Heart right ventricle (tissue), 16 donors: ENCODE measurements at regions of chr15 and their contacts with region 1.

Region 1: DNA sequence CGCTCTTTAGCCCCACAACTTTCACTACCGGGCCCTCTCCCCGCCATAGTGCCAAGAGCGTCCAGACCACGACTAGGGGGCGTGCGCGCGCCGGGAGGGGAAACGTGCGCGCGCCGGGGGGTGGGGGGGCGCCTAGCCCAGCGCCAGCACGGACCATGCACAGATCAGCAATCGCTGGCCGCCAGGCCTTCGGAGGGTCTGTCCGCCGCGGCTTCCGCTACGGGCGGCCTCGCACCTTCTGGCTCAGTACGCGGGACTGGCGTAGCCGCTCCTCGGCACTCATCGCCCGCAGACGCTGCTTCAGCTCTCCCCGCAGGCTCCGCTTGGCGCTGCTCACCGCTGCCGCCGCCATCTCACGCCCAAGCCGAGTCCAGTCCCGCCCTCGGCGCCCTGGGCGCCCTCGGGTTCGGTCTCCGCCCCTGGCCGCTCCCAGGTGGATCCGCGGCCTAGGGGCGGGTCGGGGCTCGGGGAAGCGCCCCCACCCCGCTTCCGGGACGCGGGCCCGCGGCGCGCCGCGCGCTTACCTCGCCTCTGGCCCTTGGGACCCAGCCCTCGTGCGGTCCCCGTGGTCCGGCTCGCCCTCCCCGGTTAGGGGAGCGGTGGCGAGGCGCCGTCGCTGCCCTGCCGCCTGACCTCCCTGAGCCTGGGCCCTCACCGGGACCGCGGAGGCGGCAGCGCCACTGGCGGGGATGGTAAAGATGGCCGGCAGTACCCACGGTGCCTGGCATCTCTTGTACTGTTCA is at the start of gene MTHFS:
- DNase-seq: peak; percentile 75 to 82
- ATAC-seq: peak; percentile 96 to 99 (median 97)
- H3K4me3 ChIP-seq: peak within 1 kb of the TSS; percentile 52 to 95 (median 79)
- H3K27ac ChIP-seq: peak within 1 kb of the TSS; percentile 77 to 99 (median 96)
- H3K4me1 ChIP-seq: peaks cover 0 to 39% (median 7%) of the 10 kb centered on the region in 9 donors
- H3K27me3 ChIP-seq: no peaks in the 10 kb centered on the region
- CTCF ChIP-seq: peak in 8 of 9 donors; percentile 42 to 73 (median 60)
- total RNA-seq, gene MTHFS: 10.1 to 25.6 (median 19.3) TPM

Region 2: GRCh38 chr15:79923515-79924395 is 26.9 kb after region 1 on chr15:
- intact Hi-C with region 1: loop called in 3 of 10 experiments (anchors 1 to 2 kb)
- DNase-seq: peak; percentile 92 to 94
- ATAC-seq: peak; percentile 98 to 100 (median 99)
- H3K4me3 ChIP-seq: peak overlapping the region; percentile 66 to 99 (median 87)
- H3K27ac ChIP-seq: peak overlapping the region; percentile 50 to 98 (median 94)
- H3K4me1 ChIP-seq: peaks cover 0 to 16% (median 9%) of the 10 kb centered on the region in 9 donors
- H3K27me3 ChIP-seq: no peaks in the 10 kb centered on the region
- CTCF ChIP-seq: no peak

Region 3: DNA sequence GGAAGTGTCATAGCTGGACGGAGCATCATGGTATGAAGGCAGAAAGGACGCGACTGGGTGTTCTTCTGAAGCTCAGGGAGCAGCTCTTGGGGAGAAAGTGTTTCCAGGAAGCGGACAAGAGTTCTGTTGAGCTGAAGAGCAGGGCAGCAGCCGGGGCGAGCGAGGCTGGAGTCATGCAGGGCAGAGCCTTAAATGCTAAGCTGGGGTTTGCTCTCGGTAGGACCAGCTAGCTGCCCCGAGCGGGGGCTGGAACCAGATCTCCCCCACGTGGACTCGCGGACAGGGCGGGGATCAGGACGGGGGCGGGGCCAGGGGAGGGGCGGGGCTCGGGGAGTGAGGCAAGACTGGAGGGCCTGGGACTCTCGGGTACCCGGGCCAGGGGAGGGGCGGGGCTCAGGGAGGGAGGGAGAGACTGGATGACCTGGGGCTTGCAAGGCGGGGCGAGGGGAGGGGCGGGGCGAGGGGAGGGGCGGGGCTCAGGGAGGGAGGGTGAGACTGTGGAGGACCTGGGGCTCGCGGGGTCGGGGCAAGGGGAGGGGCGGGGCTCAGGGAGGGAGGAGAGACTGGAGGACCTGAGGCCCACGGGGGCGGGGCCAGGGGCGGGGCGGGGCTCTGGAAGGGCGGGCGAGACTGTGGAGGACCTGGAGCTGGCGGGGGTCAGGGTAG is 255.5 kb after region 1 on chr15:
- intact Hi-C with region 1: loop called in 2 of 10 experiments (anchors 10 kb)
- DNase-seq: peak; percentile 96
- ATAC-seq: peak; percentile 86 to 94 (median 92)
- H3K4me3 ChIP-seq: peak overlapping the region; percentile 55 to 84 (median 72)
- H3K27ac ChIP-seq: peak overlapping the region in 9 of 10 donors; percentile 57 to 82 (median 75)
- H3K4me1 ChIP-seq: peaks cover 6 to 40% (median 20%) of the 10 kb centered on the region in 9 donors
- H3K27me3 ChIP-seq: no peaks in the 10 kb centered on the region
- CTCF ChIP-seq: no peak

Region 4: GRCh38 chr15:80173022-80173759 is 276.4 kb after region 1 on chr15:
- intact Hi-C with region 1: loop called in 3 of 10 experiments (anchors 10 kb)
- DNase-seq: peak; percentile 47 to 53
- ATAC-seq: peak; percentile 33 to 85 (median 74)
- H3K4me3 ChIP-seq: no peak overlapping the region
- H3K27ac ChIP-seq: no peak overlapping the region
- H3K4me1 ChIP-seq: peaks cover 0 to 15% (median 3%) of the 10 kb centered on the region in 9 donors
- H3K27me3 ChIP-seq: no peaks in the 10 kb centered on the region
- CTCF ChIP-seq: peak; percentile 52 to 75 (median 68)